Heart left ventricle (tissue), 16 donors: ENCODE measurements at regions of chr19 and their contacts with region 1.

Region 1: DNA sequence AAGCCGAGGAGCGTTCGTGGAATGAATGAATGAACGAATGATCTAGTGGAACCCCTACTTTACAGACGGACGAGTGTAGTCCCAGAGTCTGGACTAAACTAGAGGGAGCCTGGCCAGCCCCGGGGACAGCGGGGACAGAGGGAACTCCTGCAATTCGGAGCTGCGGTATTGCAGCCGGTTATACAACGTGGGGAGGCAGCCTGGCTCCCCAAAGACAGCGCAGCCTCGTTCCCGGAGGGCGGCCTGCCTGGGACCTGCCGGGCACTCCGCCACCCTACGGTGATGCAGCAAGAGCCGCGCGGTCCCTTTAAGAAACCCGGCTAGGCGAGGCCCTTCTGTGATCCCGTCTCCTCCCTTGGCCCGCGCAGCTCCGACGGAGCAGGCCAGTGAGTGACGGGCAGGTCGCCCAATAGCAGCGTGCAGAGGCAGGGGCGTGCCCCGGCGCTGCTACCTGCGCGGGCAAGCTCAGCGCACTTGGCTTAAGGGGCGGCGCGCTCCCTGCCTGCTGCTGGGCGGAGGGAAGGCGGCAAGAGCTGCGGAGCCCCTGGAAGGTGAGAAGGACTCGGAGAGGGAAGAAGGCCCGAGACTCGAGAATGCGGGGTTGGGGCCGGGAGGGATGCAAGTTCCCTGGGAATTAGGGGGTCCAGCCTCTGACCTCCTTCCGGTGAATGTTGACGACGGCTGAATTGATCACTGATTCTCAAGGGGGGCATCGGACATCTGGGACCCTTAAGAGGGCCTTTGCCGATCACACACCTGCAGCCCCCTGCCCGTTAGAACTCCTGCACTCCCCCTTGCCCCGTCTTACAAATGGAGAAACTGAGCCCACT is at the start of gene ABCA7:
- DNase-seq: peak; percentile 98 to 100 (median 99)
- ATAC-seq: peak; percentile 95 to 96 (median 95)
- H3K4me3 ChIP-seq: peak within 1 kb of the TSS; percentile 25 to 82 (median 62)
- H3K27ac ChIP-seq: peak within 1 kb of the TSS in 8 of 12 donors; percentile 21 to 92 (median 56)
- H3K4me1 ChIP-seq: peaks cover 3 to 53% (median 22%) of the 10 kb centered on the region in 12 donors
- H3K27me3 ChIP-seq: no peaks in the 10 kb centered on the region
- CTCF ChIP-seq: peak in 4 of 12 donors; percentile 6 to 16 (median 8)
- POLR2A ChIP-seq: peak in 1 of 2 donors; percentile 69
- total RNA-seq, gene ABCA7: 5.9 to 12.4 (median 9.2) TPM

Region 2: DNA sequence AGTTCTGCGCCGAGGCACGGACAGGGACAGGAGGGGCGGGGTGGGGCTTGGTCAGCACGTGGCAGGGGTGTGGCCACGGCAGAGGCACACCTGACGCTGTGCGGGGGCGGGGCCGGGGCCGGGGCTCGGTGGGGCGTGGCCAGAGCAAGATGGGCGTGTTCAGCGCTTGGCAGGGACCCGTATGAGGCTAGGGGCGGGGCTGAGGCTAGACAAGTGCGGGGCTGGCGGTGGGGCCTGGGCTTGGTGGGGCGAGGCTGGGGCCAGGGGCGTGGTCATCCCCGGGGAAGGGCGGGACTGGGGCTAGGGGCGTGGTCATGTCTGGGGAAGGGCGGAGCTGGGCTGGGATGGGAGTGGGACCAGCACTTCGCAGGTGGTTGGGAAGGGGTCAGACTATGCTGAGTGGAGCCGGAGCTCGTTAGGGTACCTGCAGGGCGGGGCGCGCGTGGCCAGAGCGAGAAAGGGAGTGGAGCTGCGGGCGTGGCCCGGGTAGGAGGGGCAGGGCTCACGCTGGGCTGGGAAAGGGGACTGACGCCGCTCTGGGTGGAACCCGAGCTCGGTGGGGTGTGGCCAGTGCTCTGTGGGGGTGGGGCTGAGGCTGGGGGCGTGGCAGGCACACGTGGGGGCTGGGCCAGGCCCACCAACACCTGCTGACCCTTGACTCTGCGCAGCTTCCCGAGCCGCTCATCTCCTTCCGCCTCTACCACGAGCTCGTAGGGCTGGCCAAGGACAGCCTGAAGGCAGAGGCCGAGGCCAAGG is 42.5 kb after region 1 on chr19:
- intact Hi-C with region 1: loop called in 1 of 10 experiments (anchors 10 kb)
- DNase-seq: peak in 2 of 5 donors; percentile 69 to 76
- ATAC-seq: peak in 3 of 4 donors; percentile 53 to 64 (median 54)
- H3K4me3 ChIP-seq: peak overlapping the region in 4 of 12 donors; percentile 12 to 31 (median 29)
- H3K27ac ChIP-seq: no peak overlapping the region
- H3K4me1 ChIP-seq: peaks cover 0 to 43% (median 3%) of the 10 kb centered on the region in 12 donors
- H3K27me3 ChIP-seq: peaks cover 0 to 6% (median 0%) of the 10 kb centered on the region in 9 donors
- CTCF ChIP-seq: no peak
- POLR2A ChIP-seq: no peak

Region 3: GRCh38 chr19:1094975-1095701 is 55.3 kb after region 1 on chr19 and contains the start of gene POLR2E:
- intact Hi-C with region 1: loop called in 2 of 10 experiments (anchors 5 kb)
- DNase-seq: peak; percentile 99 to 100 (median 99)
- ATAC-seq: peak; percentile 96 to 99 (median 98)
- H3K4me3 ChIP-seq: peak within 1 kb of the TSS; percentile 67 to 97 (median 88)
- H3K27ac ChIP-seq: peak within 1 kb of the TSS in 11 of 12 donors; percentile 65 to 88 (median 77)
- H3K4me1 ChIP-seq: peaks cover 5 to 49% (median 26%) of the 10 kb centered on the region in 12 donors
- H3K27me3 ChIP-seq: no peaks in the 10 kb centered on the region
- CTCF ChIP-seq: no peak
- POLR2A ChIP-seq: peak; percentile 35 to 88
- total RNA-seq, gene POLR2E: 116 to 220 (median 139) TPM